MCF 10A (cell line): ENCODE measurements at regions of chrX and their contacts with region 1.

Region 1: GRCh38 chrX:2595258-2595657 is 94.5 kb upstream of the DHRSX start:
- DNase-seq: peak; percentile 44
- H3K4me3 Mint-ChIP-seq: no peak overlapping the region
- H3K27ac Mint-ChIP-seq: no peak overlapping the region
- H3K4me1 Mint-ChIP-seq: peaks cover 6% of the 10 kb centered on the region
- H3K27me3 Mint-ChIP-seq: no peaks in the 10 kb centered on the region
- CTCF ChIP-seq: no peak

Region 2: GRCh38 chrX:1649621-1650020 is 945.6 kb before region 1 on chrX:
- CTCF ChIA-PET with region 1: no interaction called
- POLR2A ChIA-PET with region 1: no interaction called
- intact Hi-C with region 1: loop called (anchors 1 kb)
- DNase-seq: no peak
- H3K4me3 Mint-ChIP-seq: no peak overlapping the region
- H3K27ac Mint-ChIP-seq: no peak overlapping the region
- H3K4me1 Mint-ChIP-seq: no peaks in the 10 kb centered on the region
- H3K27me3 Mint-ChIP-seq: no peaks in the 10 kb centered on the region
- CTCF ChIP-seq: no peak

Region 3: DNA sequence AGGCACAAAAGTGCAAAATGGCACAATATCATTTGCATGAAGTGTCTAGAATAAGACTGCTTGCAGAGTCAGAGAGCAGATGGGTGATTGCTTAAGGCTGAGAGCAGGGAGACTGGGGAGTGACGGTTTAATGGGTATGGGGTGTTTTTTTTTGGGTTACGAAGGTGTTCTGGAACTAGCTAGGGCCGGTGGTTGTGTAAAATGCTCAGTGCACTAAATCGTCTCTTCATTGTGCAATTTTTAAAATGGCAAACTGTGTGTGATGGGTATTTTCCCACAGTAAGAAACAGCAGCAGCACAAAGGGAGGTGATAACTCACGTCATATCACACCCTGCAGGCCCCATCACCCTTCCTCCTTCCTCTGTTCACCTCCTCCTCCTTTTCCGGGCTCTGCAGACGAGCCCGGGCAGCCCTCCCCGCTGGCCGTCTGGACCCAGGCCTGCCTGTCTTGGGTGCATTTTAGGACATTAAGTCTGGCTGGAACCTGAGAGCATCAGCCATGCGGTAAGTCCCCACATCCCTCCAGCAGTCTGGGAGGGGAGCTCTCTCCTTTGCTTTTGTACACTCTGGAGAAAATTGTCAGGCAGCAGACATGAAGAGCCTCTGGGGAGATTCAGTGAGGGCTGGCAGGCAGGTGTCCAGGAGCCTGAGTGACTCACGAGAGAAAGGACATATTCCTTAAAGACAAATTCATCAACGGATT is 937.7 kb before region 1 on chrX:
- CTCF ChIA-PET with region 1: no interaction called
- POLR2A ChIA-PET with region 1: no interaction called
- intact Hi-C with region 1: loop called (anchors 1 kb)
- DNase-seq: peak; percentile 57
- H3K4me3 Mint-ChIP-seq: peak overlapping the region; percentile 56
- H3K27ac Mint-ChIP-seq: peak overlapping the region; percentile 1
- H3K4me1 Mint-ChIP-seq: peaks cover 21% of the 10 kb centered on the region
- H3K27me3 Mint-ChIP-seq: no peaks in the 10 kb centered on the region
- CTCF ChIP-seq: no peak

Region 4: DNA sequence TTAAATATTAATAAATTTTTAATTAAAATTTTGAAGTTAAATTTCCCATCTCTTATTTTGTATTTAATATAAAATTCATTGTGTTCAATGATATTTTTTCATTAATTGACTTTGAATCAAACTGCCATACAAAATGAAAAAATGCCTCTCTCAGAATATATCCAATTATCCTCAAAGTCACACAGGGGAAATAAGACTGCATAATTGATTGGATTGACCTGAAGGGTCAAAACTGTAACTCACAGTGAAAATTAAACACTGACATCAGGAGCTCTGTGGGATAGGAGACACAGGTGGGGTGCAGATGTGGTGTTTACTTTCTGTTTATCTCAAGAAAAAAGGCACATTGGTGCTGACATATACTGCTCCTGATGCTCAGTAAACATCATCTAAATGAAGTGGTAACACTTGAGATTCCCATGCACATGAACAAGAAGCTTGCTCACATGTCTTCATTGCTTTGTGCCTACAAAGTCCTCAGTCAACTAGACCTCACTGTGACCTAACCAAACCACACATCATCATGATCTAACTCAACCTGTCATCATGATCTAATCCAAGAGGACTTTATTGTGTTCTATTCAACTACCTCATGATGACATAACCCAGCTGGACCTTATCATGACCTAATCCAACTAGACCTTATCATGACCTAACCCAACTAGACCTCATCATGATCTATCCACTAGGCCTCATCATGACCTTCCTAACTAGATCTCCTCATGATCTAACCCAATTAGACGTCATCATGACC is 178.2 kb before region 1 on chrX:
- CTCF ChIA-PET with region 1: no interaction called
- POLR2A ChIA-PET with region 1: no interaction called
- intact Hi-C with region 1: no loop called
- DNase-seq: no peak
- H3K4me3 Mint-ChIP-seq: no peak overlapping the region
- H3K27ac Mint-ChIP-seq: no peak overlapping the region
- H3K4me1 Mint-ChIP-seq: no peaks in the 10 kb centered on the region
- H3K27me3 Mint-ChIP-seq: no peaks in the 10 kb centered on the region
- CTCF ChIP-seq: no peak